A673 (cell line): ENCODE measurements at regions of chr1 and their contacts with region 1.

Region 1: GRCh38 chr1:106268056-106268455 is 788.4 kb upstream of the PRMT6 start:
- DNase-seq: peak; percentile 73
- H3K4me3 ChIP-seq: no peak overlapping the region
- H3K27ac ChIP-seq: no peak overlapping the region
- H3K4me1 ChIP-seq: peaks cover 11% of the 10 kb centered on the region
- H3K27me3 ChIP-seq: no peaks in the 10 kb centered on the region
- CTCF ChIP-seq: peak; percentile 58

Region 2: GRCh38 chr1:106022312-106022902 is 245.6 kb before region 1 on chr1:
- CTCF ChIA-PET with region 1: no interaction called
- POLR2A ChIA-PET with region 1: no interaction called
- intact Hi-C with region 1: loop called (anchors 5 kb)
- DNase-seq: peak; percentile 54
- H3K4me3 ChIP-seq: no peak overlapping the region
- H3K27ac ChIP-seq: peak overlapping the region; percentile 15
- H3K4me1 ChIP-seq: peaks cover 7% of the 10 kb centered on the region
- H3K27me3 ChIP-seq: no peaks in the 10 kb centered on the region
- CTCF ChIP-seq: peak; percentile 71

Region 3: DNA sequence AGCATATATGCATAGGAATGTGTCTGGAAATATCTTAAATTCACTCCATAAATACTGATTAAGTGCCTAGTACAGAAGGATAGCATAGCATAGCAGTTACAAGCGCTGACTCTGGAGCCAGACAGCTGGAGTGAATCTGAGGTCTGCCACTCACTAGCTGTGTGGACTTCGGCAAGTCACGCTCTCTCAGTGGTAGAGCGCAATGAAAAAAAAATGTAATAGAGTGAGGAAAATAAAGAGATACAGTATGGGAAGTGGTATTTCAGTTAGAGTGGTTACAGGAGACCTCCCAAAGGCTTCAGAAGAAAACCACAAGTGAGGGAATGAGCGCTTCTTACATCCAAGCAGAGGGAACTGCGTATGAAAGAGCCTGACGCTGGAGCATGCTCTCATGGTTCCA is 449.5 kb after region 1 on chr1:
- CTCF ChIA-PET with region 1: no interaction called
- POLR2A ChIA-PET with region 1: no interaction called
- intact Hi-C with region 1: no loop called
- DNase-seq: no peak
- H3K4me3 ChIP-seq: no peak overlapping the region
- H3K27ac ChIP-seq: no peak overlapping the region
- H3K4me1 ChIP-seq: no peaks in the 10 kb centered on the region
- H3K27me3 ChIP-seq: no peaks in the 10 kb centered on the region
- CTCF ChIP-seq: no peak